Activated CD8-positive, alpha-beta T cell treated with anti-CD3 and anti-CD28 coated beads, Interleukin-2, amount 10 ng/mL, durations not matched to agents 7 days and 5 days (primary cell): ENCODE measurements at regions of chr7 and their contacts with region 1.

Region 1: DNA sequence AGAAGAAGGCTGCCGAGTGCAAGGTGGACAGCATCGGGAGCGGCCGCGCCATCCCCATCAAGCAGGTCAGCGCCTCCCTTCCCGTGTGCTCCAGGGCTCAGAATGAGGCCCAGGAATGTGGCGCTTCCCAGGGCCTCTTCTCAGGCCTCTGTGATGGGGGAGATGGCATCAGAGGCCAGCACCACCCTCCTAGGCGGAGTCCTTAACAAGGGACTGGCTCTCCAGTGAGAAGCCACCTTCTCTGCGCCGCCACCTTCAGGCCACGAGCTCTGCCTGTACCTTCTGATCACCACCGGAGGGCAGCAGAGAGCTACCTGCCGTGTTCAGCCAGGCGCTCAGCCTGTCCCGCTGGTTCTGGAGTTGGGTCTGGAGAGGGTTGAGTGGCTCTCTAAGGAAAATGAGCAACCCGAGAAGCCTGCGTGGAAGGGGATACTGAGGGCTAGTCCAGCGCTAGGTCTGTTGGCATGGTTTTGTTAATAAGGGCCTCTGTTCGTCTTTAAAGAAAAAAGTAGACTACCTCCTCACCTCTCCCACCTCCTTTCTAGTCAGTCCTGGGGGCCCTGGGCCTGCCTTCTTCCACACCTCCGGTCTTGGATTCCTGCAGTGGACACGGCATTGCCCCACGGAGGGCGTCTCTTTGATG is 37.7 kb downstream of the AGAP3 start:
- DNase-seq: peak; percentile 88
- ATAC-seq: peak; percentile 93
- H3K4me3 Mint-ChIP-seq: no peak overlapping the region
- H3K27ac Mint-ChIP-seq: no peak overlapping the region
- H3K4me1 Mint-ChIP-seq: no peaks in the 10 kb centered on the region
- H3K27me3 Mint-ChIP-seq: no peaks in the 10 kb centered on the region

Region 2: DNA sequence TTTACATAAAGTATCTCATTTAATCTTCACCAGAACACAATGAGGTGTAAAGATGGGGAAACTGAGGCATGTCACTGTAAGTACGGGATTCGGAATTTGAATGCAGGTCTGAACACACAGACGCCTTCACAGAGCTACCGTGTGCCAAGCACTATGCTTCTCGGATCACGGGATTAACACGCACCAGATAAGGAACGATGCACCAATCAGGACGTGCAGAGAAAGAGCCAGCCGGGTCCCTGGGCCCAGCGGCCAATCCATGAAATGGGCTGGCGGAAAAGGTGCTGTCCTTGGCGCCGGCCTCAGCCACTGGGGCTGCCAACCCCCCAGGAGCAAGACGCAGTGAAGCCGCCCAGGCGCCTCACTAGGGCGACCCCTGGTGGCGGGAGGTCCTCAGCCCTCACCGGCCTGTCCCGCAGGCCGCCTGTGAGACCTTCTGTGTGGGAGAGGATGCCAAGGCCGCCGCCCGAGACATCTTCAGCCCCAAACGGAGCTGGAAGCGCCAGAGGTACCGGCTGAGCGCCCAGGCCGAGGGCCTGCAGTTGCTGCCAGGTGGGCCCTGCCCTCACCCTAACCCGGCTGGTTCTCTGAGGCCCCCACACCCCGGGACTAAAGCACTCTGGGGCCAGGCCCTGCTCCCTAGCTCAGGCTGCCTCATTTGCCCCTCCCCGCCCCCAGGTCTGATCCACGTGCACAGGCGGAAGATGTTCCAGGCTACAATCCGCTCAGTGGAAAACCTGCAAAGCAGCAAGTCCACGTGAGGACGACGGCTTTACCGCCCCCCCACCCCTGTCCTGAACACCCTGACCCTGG is 115.2 kb before region 1 on chr7:
- CTCF ChIA-PET with region 1: no interaction called
- POLR2A ChIA-PET with region 1: no interaction called
- DNase-seq: peak; percentile 83
- ATAC-seq: peak; percentile 62
- H3K4me3 Mint-ChIP-seq: peak overlapping the region; percentile 76
- H3K27ac Mint-ChIP-seq: peak overlapping the region; percentile 83
- H3K4me1 Mint-ChIP-seq: peaks cover 62% of the 10 kb centered on the region
- H3K27me3 Mint-ChIP-seq: no peaks in the 10 kb centered on the region

Region 3: DNA sequence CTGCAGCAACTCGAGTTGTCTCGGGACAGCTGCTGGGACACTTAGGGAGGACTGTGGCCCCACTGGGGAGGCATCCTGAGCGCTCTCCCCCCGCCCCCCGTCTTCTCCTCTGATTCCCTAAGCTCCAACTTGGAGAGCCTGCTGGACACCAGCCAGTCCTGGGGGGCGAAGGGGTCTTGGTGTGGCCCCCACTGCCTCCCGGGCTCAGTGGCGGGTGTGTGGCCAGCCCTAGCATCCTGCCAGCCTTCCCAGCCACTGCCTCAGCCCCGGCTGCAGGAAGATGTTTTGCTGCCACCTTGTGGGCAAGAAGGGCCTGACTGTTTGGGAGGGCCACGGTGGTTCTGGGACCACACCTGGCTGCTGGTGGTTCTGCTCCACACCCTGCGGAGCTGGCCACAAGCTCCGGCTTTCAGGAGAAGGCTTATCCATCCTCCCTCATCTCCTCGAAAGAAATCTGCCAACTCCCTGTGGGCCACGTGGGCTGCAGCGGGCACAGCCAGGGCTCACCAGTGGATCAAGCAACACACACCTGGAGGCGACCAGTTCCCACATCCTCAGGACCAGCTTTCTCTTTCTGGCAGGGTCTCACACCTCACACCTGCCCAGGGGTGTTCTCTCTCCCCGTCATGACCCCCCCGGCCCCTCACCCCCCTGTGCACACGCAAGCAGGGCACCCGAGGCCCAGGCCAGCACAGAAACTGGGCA is 12.8 kb before region 1 on chr7:
- CTCF ChIA-PET with region 1: interaction called, 22 read pairs
- POLR2A ChIA-PET with region 1: interaction called, 3 read pairs
- DNase-seq: peak; percentile 83
- ATAC-seq: peak; percentile 84
- H3K4me3 Mint-ChIP-seq: no peak overlapping the region
- H3K27ac Mint-ChIP-seq: no peak overlapping the region
- H3K4me1 Mint-ChIP-seq: peaks cover 8% of the 10 kb centered on the region
- H3K27me3 Mint-ChIP-seq: peaks cover 20% of the 10 kb centered on the region

Region 4: DNA sequence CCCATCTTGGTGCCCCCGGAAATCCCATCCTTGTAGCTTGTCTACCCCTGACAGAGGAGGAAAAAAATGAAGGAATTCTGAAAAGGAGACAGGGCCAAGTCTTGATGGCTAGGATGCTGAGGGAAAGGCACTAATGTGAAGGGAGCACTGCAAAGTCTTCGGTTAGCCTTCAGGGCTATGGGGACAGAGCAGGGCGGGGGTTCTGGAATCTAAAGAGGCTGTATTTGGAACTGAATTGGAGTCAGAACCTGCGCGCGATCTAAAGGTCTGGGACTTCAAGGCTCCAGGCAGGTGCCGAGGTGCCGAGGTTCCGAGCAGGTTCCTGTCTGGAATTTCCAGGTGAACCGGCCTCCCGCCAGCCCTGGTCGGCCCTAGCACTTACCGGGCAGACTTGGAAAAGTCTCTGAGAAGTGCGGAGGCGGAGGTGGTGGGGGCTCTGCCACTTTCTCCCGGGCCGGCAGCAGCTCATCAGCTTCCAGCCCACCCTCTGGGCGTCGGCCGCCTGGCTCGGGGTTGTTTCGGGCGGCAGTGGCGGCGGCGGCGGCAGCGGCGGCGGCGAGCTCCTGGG is 42.8 kb after region 1 on chr7:
- CTCF ChIA-PET with region 1: interaction called, 16 read pairs
- POLR2A ChIA-PET with region 1: interaction called, 3 read pairs
- DNase-seq: no peak
- ATAC-seq: no peak
- H3K4me3 Mint-ChIP-seq: no peak overlapping the region
- H3K27ac Mint-ChIP-seq: no peak overlapping the region
- H3K4me1 Mint-ChIP-seq: peaks cover 5% of the 10 kb centered on the region
- H3K27me3 Mint-ChIP-seq: peaks cover 35% of the 10 kb centered on the region

Region 5: DNA sequence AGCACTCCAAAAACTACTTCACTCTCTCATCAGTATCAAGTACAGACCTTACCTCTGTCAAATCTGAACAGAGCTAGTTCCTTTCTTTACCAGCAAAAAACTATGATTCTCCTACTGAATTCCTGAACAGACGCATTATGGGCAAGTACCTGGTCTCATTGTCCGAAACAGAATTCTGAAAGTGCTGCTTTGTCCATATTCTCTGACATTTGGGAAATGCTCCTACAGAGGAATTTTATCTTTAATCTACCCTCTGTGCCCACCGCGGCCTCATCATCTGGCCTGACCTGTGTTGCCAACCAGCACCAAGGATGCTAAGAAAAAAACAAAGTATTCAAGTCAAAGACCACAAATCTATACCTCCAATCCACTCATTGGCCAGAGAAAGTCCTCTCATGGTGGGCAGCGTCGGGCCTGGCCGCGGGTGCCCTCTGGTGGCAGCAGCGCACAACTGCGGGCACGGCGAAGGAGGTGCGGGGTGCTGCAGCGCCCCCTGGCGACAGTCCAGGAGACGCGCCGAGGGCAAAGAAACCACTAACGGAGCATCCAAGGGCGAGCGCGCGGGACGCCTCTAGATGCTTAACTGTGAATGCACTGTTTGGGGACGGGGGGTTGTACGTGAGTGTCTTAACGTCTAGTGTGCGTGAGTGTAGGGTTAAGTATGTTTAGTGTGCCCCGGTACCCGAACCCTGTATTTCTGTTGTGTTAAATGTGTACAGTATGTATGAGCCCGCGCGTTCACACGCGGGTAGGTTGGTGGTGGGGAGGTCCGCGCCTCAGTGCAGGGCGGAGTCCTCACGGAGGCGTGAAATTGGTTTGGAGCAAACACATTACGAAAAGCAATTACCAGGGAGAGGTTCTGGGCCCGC is 48.6 kb after region 1 on chr7:
- CTCF ChIA-PET with region 1: interaction called, 10 read pairs
- POLR2A ChIA-PET with region 1: interaction called, 3 read pairs
- DNase-seq: peak; percentile 83
- ATAC-seq: peak; percentile 74
- H3K4me3 Mint-ChIP-seq: no peak overlapping the region
- H3K27ac Mint-ChIP-seq: no peak overlapping the region
- H3K4me1 Mint-ChIP-seq: peaks cover 13% of the 10 kb centered on the region
- H3K27me3 Mint-ChIP-seq: peaks cover 43% of the 10 kb centered on the region

Region 6: GRCh38 chr7:151304856-151305255 is 180.9 kb after region 1 on chr7:
- CTCF ChIA-PET with region 1: interaction called, 15 read pairs
- POLR2A ChIA-PET with region 1: no interaction called
- DNase-seq: no peak
- ATAC-seq: no peak
- H3K4me3 Mint-ChIP-seq: peak overlapping the region; percentile 31
- H3K27ac Mint-ChIP-seq: no peak overlapping the region
- H3K4me1 Mint-ChIP-seq: peaks cover 23% of the 10 kb centered on the region
- H3K27me3 Mint-ChIP-seq: peaks cover 30% of the 10 kb centered on the region